Calu3 (cell line): ENCODE measurements at regions of chr1 and their contacts with region 1.

Region 1: DNA sequence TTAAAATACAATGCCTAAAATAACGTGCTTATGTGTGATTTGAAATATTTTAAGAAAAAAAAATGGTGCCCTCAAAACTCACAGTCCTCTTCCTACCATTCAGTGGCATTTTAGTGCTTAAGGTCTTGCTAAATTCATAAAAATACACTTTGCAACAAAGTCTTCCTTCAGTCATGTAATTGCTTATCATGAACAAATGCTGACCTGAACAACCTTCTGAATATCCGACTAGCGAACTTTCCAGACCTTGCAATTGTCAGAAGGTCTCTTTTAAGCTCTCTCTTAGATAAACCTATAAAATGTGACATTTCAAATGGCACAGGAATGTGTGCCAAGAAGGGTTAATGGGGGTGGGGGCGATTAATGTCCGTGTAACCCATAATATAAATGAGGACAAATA is 858 bp downstream of the BRINP3 start:
- DNase-seq: no peak
- H3K4me3 Mint-ChIP-seq: no peak overlapping the region
- H3K27ac Mint-ChIP-seq: no peak overlapping the region
- H3K4me1 Mint-ChIP-seq: peaks cover 11% of the 10 kb centered on the region
- H3K27me3 Mint-ChIP-seq: no peaks in the 10 kb centered on the region
- CTCF ChIP-seq: no peak

Region 2: GRCh38 chr1:190578017-190578416 is 101.2 kb after region 1 on chr1:
- CTCF ChIA-PET with region 1: interaction called, 13 read pairs
- intact Hi-C with region 1: no loop called
- DNase-seq: no peak
- H3K4me3 Mint-ChIP-seq: no peak overlapping the region
- H3K27ac Mint-ChIP-seq: no peak overlapping the region
- H3K4me1 Mint-ChIP-seq: no peaks in the 10 kb centered on the region
- H3K27me3 Mint-ChIP-seq: no peaks in the 10 kb centered on the region
- CTCF ChIP-seq: no peak